Common myeloid progenitor, CD34-positive (primary cell): ENCODE measurements at regions of chr10 and their contacts with region 1.

Region 1: GRCh38 chr10:30529373-30529998 is 95.5 kb downstream of the MAP3K8 start:
- DNase-seq: peak; percentile 90 to 99 (median 97)
- H3K4me3 ChIP-seq: peak overlapping the region in 6 of 7 experiments; percentile 33 to 64 (median 52)
- H3K27ac ChIP-seq: peak overlapping the region; percentile 50 to 79
- H3K4me1 ChIP-seq: peaks cover 12 to 84% (median 45%) of the 10 kb centered on the region in 4 experiments
- H3K27me3 ChIP-seq: no peaks in the 10 kb centered on the region

Region 2: DNA sequence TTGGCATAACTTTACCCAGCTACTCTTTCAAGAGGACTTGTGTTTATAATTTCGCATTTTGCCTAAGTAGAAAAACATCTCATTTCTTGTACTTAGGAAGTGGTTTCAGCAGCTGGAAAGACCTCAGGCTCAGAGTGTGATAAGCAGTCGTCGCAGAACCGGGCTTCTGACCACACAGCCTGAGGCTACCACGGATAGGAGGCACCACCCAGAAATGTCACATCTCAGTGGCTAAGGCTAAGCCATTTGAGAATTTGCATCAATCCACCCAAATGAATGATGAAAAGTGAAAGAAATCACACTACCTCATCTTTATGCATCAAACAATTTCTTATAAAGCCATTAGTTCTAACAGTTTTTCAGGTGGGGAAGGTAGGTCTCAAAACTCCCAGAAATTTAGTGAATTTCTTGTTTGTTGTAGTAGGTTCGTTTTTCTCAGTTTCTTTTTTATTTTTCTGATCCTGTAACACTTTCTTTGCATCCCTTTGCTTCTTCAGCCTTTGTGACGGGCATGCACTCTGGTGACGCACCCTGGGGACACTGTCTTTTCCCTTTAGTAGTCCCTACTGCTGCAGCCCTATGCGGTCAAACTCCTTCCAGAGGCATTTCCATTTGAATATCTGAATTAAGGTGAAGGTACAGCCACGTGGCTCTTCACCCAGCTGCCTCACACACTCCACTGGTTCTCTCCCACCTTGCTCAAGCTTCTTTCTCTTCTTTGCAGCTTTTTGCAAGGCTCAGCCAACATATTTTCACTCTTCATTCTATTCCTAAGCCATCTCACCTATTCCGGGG is 27.0 kb before region 1 on chr10:
- CTCF ChIA-PET with region 1: interaction called, 23 read pairs
- POLR2A ChIA-PET with region 1: interaction called, 3 read pairs
- DNase-seq: peak; percentile 78 to 95 (median 93)
- H3K4me3 ChIP-seq: peak overlapping the region in 4 of 7 experiments; percentile 23 to 37 (median 32)
- H3K27ac ChIP-seq: peak overlapping the region; percentile 21 to 64
- H3K4me1 ChIP-seq: peaks cover 41 to 90% (median 78%) of the 10 kb centered on the region in 4 experiments
- H3K27me3 ChIP-seq: no peaks in the 10 kb centered on the region

Region 3: DNA sequence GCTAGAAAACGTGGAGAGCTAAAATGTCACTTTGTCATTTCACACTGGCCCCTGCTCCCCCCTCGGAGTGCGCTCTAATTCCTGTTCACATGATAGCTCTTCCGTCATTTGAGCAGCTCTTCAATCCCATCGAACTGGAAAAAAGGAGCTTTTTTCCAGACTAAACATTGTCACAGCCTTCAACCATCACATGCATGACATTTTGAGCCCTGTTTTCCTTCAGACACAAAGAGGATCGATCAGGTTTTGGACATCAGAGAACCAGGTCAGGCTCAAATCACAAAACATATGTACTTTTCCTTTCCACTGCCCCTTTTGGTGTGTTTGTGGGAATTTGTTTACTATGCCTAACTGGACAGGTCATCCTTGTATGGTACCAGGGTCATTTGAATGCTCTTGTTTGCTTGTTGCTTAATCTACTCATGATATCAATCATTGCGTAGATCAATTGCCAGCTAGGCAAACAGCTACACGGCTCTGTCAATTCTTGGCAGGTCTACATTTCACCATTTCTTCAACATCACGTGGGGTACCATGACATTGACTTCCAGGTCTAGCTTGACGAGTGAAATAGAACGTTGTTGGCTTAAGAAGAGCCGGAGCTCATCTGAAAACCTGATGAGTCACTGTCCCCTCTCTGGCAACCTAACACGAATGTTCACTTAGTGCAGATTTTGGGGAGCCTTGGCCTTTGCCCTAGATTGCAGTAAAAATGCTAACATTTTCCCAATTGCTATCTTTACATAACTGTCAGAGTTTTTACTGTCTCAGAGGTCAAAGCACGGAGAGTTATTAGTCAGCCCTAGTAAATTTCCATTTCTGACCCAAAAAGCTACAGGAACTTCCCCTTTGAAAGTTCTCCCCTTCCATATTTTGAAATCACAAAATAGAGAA is 12.8 kb after region 1 on chr10:
- CTCF ChIA-PET with region 1: interaction called, 13 read pairs
- POLR2A ChIA-PET with region 1: no interaction called
- DNase-seq: peak in 2 of 3 donors; percentile 80 to 86
- H3K4me3 ChIP-seq: no peak overlapping the region
- H3K27ac ChIP-seq: no peak overlapping the region
- H3K4me1 ChIP-seq: peaks cover 2 to 36% (median 26%) of the 10 kb centered on the region in 4 experiments
- H3K27me3 ChIP-seq: no peaks in the 10 kb centered on the region